GM12878 (cell line): ENCODE measurements at regions of chr13 and their contacts with region 1.

Region 1: DNA sequence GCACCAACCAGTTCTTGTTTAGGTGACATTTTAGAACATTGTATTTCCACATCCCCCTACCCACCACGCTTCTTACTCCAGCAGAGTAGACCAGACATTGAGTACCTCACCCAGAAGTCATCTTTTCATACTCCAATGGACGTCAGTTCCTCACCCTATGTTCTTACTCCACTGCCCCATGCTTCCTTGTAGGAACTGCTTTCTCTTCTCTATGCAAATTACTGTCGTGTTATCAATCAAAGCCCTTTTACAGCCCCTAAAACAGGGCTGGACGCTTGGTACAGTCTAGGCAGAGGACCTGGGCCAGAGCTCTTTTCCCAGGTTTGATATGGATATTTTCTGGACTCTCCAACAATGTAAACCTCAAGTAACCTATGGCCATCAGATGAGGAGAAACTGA is 58.2 kb downstream of the USP12 start:
- DNase-seq: no peak
- ATAC-seq: peak; percentile 62
- H3K4me3 ChIP-seq: peak overlapping the region; percentile 24; the same call in 1 of the 2 replicates
- H3K27ac ChIP-seq: peak overlapping the region; percentile 50; the same call in 1 of the 2 replicates
- H3K4me1 ChIP-seq: peaks cover 28% of the 10 kb centered on the region
- H3K27me3 ChIP-seq: no peaks in the 10 kb centered on the region
- CTCF ChIP-seq: no peak
- EP300 ChIP-seq: no peak
- POLR2A ChIP-seq: no peak
- RAD21 ChIP-seq: no peak

Region 2: GRCh38 chr13:27125357-27126282 is 12.2 kb after region 1 on chr13:
- CTCF ChIA-PET with region 1: interaction called, 8 read pairs
- POLR2A ChIA-PET with region 1: interaction called, 5 read pairs
- RAD21 ChIA-PET with region 1: interaction called, 12 read pairs
- SMC1A ChIA-PET with region 1: interaction called, 17 read pairs
- in situ Hi-C with region 1: no loop called
- intact Hi-C with region 1: no loop called
- DNase-seq: no peak
- ATAC-seq: no peak
- H3K4me3 ChIP-seq: no peak overlapping the region
- H3K27ac ChIP-seq: no peak overlapping the region
- H3K4me1 ChIP-seq: peaks cover 18% of the 10 kb centered on the region
- H3K27me3 ChIP-seq: no peaks in the 10 kb centered on the region
- CTCF ChIP-seq: no peak
- EP300 ChIP-seq: no peak
- POLR2A ChIP-seq: no peak
- RAD21 ChIP-seq: no peak

Region 3: GRCh38 chr13:27599845-27600553 is 486.6 kb after region 1 on chr13:
- CTCF ChIA-PET with region 1: no interaction called
- POLR2A ChIA-PET with region 1: no interaction called
- RAD21 ChIA-PET with region 1: no interaction called
- SMC1A ChIA-PET with region 1: no interaction called
- in situ Hi-C with region 1: no loop called
- intact Hi-C with region 1: no loop called
- DNase-seq: no peak
- ATAC-seq: no peak
- H3K4me3 ChIP-seq: no peak overlapping the region
- H3K27ac ChIP-seq: no peak overlapping the region
- H3K4me1 ChIP-seq: peaks cover 10% of the 10 kb centered on the region; the same call in 1 of the 2 replicates
- H3K27me3 ChIP-seq: no peaks in the 10 kb centered on the region
- CTCF ChIP-seq: no peak
- EP300 ChIP-seq: no peak
- POLR2A ChIP-seq: no peak
- RAD21 ChIP-seq: no peak

Region 4: GRCh38 chr13:27704681-27705080 is 591.2 kb after region 1 on chr13:
- CTCF ChIA-PET with region 1: no interaction called
- POLR2A ChIA-PET with region 1: no interaction called
- RAD21 ChIA-PET with region 1: no interaction called
- SMC1A ChIA-PET with region 1: no interaction called
- in situ Hi-C with region 1: no loop called
- intact Hi-C with region 1: no loop called
- DNase-seq: peak; percentile 1
- ATAC-seq: peak; percentile 76
- H3K4me3 ChIP-seq: no peak overlapping the region
- H3K27ac ChIP-seq: no peak overlapping the region
- H3K4me1 ChIP-seq: no peaks in the 10 kb centered on the region
- H3K27me3 ChIP-seq: no peaks in the 10 kb centered on the region; a peak in 1 of 4 replicates
- CTCF ChIP-seq: no peak
- EP300 ChIP-seq: no peak
- POLR2A ChIP-seq: no peak
- RAD21 ChIP-seq: no peak